Mammary epithelial cell (primary cell): ENCODE measurements at regions of chr5 and their contacts with region 1.

Region 1: GRCh38 chr5:159456722-159457465 is 126.6 kb upstream of the IL12B start:
- DNase-seq: peak; percentile 77
- H3K4me3 ChIP-seq: no peak overlapping the region
- H3K27ac ChIP-seq: no peak overlapping the region
- H3K4me1 ChIP-seq: peaks cover 6% of the 10 kb centered on the region
- H3K27me3 ChIP-seq: no peaks in the 10 kb centered on the region
- CTCF ChIP-seq: no peak

Region 2: DNA sequence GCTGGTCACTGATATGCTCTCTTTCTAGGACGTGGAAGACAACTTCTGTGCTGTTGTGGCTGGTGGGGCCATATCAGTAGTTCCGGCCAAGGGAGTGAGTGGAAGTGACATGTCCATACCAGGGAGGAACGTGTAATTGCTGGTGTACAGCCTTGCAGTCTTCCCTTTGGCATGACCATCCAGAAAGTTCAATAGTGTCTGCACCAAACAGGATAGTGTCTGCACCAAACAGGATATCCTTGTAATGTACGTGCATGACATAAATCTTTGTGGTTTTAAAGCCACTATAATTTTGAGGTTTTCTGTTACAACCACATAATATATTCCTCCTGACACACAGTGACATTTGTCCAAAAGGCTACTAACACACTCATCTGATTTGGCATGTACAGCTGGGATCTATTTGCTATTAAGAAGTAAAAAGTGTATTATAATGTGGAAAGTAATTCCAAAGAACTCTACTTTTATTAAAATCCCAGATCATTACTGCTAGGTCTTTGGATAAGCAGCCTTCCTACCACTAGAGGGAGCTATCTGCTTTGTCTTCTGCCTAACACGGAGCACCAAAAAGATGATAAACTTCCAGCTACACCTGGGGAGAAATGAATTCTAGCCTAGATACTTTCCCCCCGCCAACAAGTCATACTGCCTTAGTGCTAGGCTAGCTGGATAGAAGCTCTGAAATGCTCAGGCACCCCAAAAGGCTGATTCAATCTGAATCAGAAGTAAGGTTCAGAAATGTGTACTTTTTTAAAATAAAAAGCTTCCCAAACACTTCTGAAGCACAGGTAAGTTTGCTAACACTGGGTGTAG is 300.3 kb before region 1 on chr5:
- CTCF ChIA-PET with region 1: no interaction called
- dilution Hi-C with region 1: no loop called
- in situ Hi-C with region 1: no loop called
- intact Hi-C with region 1: no loop called
- DNase-seq: peak; percentile 65
- H3K4me3 ChIP-seq: no peak overlapping the region
- H3K27ac ChIP-seq: no peak overlapping the region
- H3K4me1 ChIP-seq: peaks cover under 1% of the 10 kb centered on the region
- H3K27me3 ChIP-seq: no peaks in the 10 kb centered on the region
- CTCF ChIP-seq: peak; percentile 84 to 87

Region 3: DNA sequence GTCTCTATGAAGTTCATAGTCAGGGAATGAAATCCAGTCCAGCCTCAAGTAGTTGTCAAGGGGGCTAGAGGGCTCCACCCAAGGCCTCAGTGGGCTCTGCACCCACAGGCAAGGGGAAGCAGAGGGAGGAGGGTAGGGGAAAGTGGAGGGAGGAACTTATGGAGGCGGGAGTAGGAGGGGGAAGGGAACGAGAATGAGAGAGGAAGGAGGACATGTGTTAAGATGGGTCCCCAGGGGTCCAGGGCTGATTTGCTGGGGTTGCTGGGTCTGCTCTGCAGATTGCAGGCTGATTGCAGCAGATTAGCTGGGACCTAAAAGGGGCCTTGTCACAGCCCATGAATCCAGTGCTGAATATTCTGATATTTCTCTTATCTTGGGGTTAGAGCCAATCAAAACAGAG is 40.3 kb after region 1 on chr5:
- CTCF ChIA-PET with region 1: no interaction called
- dilution Hi-C with region 1: loop called (anchors 5 kb)
- in situ Hi-C with region 1: no loop called
- intact Hi-C with region 1: no loop called
- DNase-seq: no peak
- H3K4me3 ChIP-seq: no peak overlapping the region
- H3K27ac ChIP-seq: no peak overlapping the region
- H3K4me1 ChIP-seq: no peaks in the 10 kb centered on the region
- H3K27me3 ChIP-seq: no peaks in the 10 kb centered on the region
- CTCF ChIP-seq: no peak

Region 4: DNA sequence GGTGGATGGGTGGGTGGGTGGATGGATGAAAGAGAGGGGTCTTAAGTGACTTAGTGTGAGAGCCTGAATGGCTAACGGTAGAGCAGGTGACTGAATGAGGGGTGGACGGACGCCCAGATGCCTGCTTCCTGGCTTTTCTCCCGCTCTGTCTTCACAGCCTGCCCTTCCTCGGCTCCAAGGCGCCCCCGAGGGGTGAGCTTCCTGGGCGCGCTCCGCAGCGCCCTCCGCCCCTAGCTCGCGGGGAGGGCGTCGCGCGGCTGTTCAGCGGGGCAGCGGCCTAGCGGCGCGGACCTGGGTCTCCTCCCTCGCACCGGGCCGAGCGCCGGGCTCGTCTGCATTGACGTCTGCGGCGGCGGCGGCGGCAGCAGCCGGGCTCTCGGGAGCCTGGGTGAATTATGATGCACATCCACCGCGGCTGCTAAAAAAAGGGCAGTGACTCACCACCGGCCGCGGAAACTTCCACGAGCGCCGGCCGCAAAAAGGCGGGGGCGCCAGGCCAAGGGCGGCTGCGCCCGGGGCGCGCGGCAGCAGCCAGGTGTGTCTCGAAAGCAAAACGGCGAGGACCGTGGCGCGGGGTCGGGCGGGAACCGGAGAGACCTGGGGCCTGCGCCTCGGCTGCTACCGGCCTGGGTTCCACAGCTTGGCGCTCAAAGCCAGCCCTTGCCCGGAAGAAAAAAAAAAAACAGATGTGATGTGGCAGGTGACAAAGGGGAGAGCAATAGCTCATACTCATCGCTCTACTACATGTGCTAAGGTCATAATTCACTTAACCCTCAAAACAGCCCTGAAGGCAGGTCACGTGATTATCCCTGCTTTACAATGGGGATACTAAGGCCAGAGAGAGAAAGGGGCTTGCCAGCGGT is 316.4 kb after region 1 on chr5:
- CTCF ChIA-PET with region 1: no interaction called
- dilution Hi-C with region 1: no loop called
- in situ Hi-C with region 1: no loop called
- intact Hi-C with region 1: loop called (anchors 10 kb)
- DNase-seq: peak; percentile 90
- H3K4me3 ChIP-seq: peak overlapping the region; percentile 16 to 45 (median 35)
- H3K27ac ChIP-seq: peak overlapping the region; percentile 41
- H3K4me1 ChIP-seq: peaks cover 10% of the 10 kb centered on the region
- H3K27me3 ChIP-seq: no peaks in the 10 kb centered on the region
- CTCF ChIP-seq: peak in 1 of 2 donors; percentile 11